Activated T-helper 2 cell treated with anti-CD3 and anti-CD28 coated beads, Interferon-gamma antibody, Interleukin-2, Interleukin-4, amounts not matched to agents 10 μg/mL and 5 μg/mL and 100 μg/mL, durations not matched to agents 14 hours and 24 hours and 36 hours (primary cell): ENCODE measurements at regions of chr4 and their contacts with region 1.

Region 1: GRCh38 chr4:40840985-40841571 is 91.3 kb downstream of the NSUN7 start:
- DNase-seq: peak; percentile 61
- H3K4me3 Mint-ChIP-seq: no peak overlapping the region
- H3K27ac Mint-ChIP-seq: no peak overlapping the region
- H3K4me1 Mint-ChIP-seq: peaks cover 8% of the 10 kb centered on the region
- H3K27me3 Mint-ChIP-seq: peaks cover 9% of the 10 kb centered on the region

Region 2: GRCh38 chr4:40325189-40326019 is 515.7 kb before region 1 on chr4:
- intact Hi-C with region 1: loop called (anchors 5 kb)
- DNase-seq: peak; percentile 59
- H3K4me3 Mint-ChIP-seq: no peak overlapping the region
- H3K27ac Mint-ChIP-seq: no peak overlapping the region
- H3K4me1 Mint-ChIP-seq: peaks cover 31% of the 10 kb centered on the region
- H3K27me3 Mint-ChIP-seq: peaks cover 5% of the 10 kb centered on the region

Region 3: GRCh38 chr4:40736910-40737309 is 104.2 kb before region 1 on chr4:
- intact Hi-C with region 1: loop called (anchors 1 kb)
- DNase-seq: no peak
- H3K4me3 Mint-ChIP-seq: no peak overlapping the region
- H3K27ac Mint-ChIP-seq: no peak overlapping the region
- H3K4me1 Mint-ChIP-seq: peaks cover 19% of the 10 kb centered on the region
- H3K27me3 Mint-ChIP-seq: peaks cover 14% of the 10 kb centered on the region

Region 4: GRCh38 chr4:40857956-40858355 is 16.9 kb after region 1 on chr4:
- intact Hi-C with region 1: loop called (anchors 2 kb)
- DNase-seq: no peak
- H3K4me3 Mint-ChIP-seq: no peak overlapping the region
- H3K27ac Mint-ChIP-seq: no peak overlapping the region
- H3K4me1 Mint-ChIP-seq: peaks cover 4% of the 10 kb centered on the region
- H3K27me3 Mint-ChIP-seq: peaks cover 65% of the 10 kb centered on the region

Region 5: GRCh38 chr4:40908702-40909362 is 67.8 kb after region 1 on chr4:
- intact Hi-C with region 1: loop called (anchors 5 kb)
- DNase-seq: peak; percentile 59
- H3K4me3 Mint-ChIP-seq: no peak overlapping the region
- H3K27ac Mint-ChIP-seq: peak overlapping the region; percentile 85
- H3K4me1 Mint-ChIP-seq: peaks cover 21% of the 10 kb centered on the region
- H3K27me3 Mint-ChIP-seq: no peaks in the 10 kb centered on the region